Head of caudate nucleus (tissue), 42 donors: ENCODE measurements at regions of chr19 and their contacts with region 1.

Region 1: DNA sequence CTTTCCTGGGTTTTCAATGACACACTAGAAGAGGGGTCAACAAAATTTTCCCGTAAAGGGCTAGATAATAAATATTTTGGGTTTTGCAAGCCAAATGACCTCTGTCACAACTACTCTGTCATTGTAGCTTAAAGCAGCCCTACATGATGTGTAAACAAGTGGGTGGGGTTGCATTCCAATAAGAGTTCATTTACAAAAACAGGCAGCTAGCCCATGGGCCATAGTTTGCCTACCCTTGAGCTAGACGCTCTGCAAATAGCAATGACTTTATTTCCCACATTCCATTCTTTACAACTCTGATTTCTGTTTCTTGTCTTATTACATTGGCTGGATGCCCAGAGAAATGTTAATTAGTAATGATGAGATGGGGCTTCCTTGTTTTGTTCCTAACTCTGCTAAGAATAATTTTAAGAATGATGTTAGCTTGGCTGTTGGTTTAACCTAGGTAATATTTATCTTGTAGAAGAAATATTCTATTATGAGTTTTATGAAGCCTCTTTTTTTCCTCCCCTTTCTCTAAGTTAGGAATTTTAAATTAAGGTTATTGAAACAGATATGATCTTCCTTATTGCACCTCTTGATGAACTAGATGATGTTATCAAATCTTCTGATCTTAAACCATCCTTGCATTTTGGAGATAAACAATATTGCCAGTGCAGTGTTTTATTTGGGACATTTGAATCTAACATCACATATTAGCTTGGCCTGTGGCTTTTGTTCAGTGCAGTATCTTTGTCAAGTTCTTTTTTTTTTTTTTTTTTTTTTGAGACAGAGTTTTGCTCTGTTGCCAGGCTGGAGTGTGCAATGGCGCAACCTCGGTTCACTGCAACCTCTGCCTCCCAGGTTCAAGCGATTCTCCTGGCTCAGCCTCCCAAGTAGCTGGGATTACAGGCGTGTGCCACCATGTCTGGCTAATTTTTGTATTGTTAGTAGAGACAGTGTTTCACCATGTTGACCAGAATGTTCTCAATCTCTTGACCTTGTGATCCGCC is 76.3 kb downstream of the ZNF557 start:
- DNase-seq: peak in 1 of 42 donors; percentile 18

Region 2: DNA sequence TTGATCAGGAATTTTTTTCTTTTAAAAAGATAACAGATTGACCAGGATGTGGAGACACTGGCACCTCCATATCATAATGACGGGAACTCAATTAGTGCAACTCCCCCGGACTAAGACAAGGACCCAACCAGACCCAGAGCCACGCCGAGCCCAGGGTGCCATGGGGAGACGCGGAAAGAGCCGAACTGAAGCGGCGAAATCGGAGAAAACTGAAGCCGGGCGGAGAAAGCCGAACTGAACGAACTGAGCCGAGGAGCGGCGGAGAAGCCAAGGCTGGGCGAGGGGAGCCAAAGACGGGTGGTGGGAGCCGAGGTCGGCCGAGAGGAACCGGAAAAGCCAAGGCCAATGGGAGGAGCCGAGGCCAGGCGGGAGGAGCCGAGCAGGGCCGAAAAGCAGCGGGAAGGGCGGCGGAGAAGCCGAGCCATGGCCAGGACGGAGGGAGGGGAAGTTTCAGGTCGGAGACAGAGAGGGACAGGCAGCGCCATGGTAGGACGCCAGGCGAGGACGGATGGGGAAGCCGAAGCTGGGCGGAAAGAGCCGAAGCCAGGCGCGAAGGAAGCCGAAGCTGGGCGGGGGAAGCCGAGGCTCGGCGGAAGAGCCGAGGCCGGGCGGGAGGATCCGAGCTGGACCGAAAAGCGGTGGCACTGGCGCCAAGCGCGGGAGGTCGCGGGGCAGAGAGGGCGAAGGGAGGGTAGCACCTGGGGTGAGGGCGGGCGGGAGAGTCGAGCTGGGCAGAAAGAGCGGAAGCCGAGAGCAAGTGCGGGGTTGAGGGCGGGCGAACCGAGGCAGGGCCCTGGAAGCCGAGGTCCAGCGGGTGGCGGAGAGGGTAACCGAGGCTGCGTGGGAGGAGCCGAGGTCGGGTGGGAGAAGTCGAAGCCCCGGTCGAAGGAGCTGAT is 46.8 kb before region 1 on chr19:
- intact Hi-C with region 1: no loop called
- DNase-seq: peak; percentile 71 to 95 (median 90)

Region 3: GRCh38 chr19:7340959-7341837 is 195.4 kb after region 1 on chr19:
- intact Hi-C with region 1: loop called (anchors 5 kb)
- DNase-seq: peak; percentile 31 to 95 (median 87)